Activated T-helper 1 cell treated with anti-CD3 and anti-CD28 coated beads, Interleukin-12 subunit alpha, Interleukin-12 subunit beta, Interleukin-2, Interleukin-4 antibody, amounts not matched to agents 30 ng/mL and 10 ng/mL and 1 ng/mL, durations not matched to agents 14 hours and 24 hours and 36 hours (primary cell): ENCODE measurements at regions of chr5 and their contacts with region 1.

Region 1: GRCh38 chr5:88690409-88691229 is 192.4 kb downstream of the MEF2C start:
- DNase-seq: peak; percentile 60
- H3K4me3 Mint-ChIP-seq: peak overlapping the region; percentile 62
- H3K27ac Mint-ChIP-seq: peak overlapping the region; percentile 92
- H3K4me1 Mint-ChIP-seq: peaks cover 21% of the 10 kb centered on the region
- H3K27me3 Mint-ChIP-seq: peaks cover 87% of the 10 kb centered on the region

Region 2: GRCh38 chr5:88660947-88661805 is 29.4 kb before region 1 on chr5:
- intact Hi-C with region 1: loop called (anchors 1 kb)
- DNase-seq: no peak
- H3K4me3 Mint-ChIP-seq: peak overlapping the region; percentile 65
- H3K27ac Mint-ChIP-seq: peak overlapping the region; percentile 61
- H3K4me1 Mint-ChIP-seq: peaks cover 23% of the 10 kb centered on the region
- H3K27me3 Mint-ChIP-seq: peaks cover 71% of the 10 kb centered on the region

Region 3: GRCh38 chr5:88666761-88667495 is 23.7 kb before region 1 on chr5:
- intact Hi-C with region 1: loop called (anchors 1 kb)
- DNase-seq: no peak
- H3K4me3 Mint-ChIP-seq: peak overlapping the region; percentile 81
- H3K27ac Mint-ChIP-seq: peak overlapping the region; percentile 29
- H3K4me1 Mint-ChIP-seq: peaks cover 31% of the 10 kb centered on the region
- H3K27me3 Mint-ChIP-seq: peaks cover 88% of the 10 kb centered on the region